AG04450 (cell line): ENCODE measurements at regions of chr3 and their contacts with region 1.

Region 1: GRCh38 chr3:61872077-61872706 is 310.8 kb downstream of the PTPRG start:
- DNase-seq: no peak
- H3K4me3 ChIP-seq: no peak overlapping the region
- H3K27ac ChIP-seq: no peak overlapping the region
- H3K27me3 ChIP-seq: no peaks in the 10 kb centered on the region
- CTCF ChIP-seq: no peak

Region 2: DNA sequence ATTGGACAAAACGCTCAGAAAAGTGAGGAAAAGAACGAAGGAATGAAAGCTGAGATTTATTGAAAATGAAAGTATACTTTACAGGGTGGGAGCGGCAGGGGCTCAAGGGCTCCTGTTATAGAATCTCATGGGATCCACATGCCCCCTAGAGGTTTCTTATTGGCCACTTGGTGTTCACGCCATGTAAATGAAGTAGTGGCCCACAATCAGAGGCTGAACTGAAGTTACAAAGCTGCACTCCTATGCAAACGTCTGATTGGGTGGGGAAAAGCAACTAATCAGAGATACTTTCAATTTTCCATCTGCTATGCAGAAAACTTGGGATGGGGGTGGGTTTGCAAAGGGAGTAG is 94.1 kb before region 1 on chr3:
- CTCF ChIA-PET with region 1: no interaction called
- POLR2A ChIA-PET with region 1: no interaction called
- DNase-seq: no peak
- H3K4me3 ChIP-seq: no peak overlapping the region
- H3K27ac ChIP-seq: no peak overlapping the region
- H3K27me3 ChIP-seq: no peaks in the 10 kb centered on the region
- CTCF ChIP-seq: no peak

Region 3: GRCh38 chr3:61807865-61808276 is 64.3 kb before region 1 on chr3:
- CTCF ChIA-PET with region 1: no interaction called
- POLR2A ChIA-PET with region 1: no interaction called
- DNase-seq: no peak
- H3K4me3 ChIP-seq: no peak overlapping the region
- H3K27ac ChIP-seq: no peak overlapping the region
- H3K27me3 ChIP-seq: no peaks in the 10 kb centered on the region
- CTCF ChIP-seq: no peak

Region 4: DNA sequence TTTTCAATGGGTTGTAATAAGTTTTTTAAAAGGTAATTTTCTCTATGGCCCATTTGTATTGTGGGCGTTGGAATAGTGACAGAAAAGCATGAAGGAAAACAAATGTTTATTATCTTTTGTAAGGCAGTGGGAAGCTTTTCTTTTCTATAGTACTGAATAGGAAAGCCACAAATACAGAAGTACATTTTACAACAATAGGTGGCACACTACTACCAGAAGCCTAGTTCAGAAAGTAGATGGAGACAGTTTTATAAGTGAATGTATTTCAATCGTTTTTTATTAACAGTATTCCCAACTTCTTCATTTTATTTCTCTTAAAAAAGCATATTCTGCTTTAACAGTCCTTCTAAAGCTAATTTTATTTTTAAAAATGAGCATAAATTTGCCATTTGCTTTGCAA is 14.1 kb before region 1 on chr3:
- CTCF ChIA-PET with region 1: interaction called, 17 read pairs
- POLR2A ChIA-PET with region 1: no interaction called
- DNase-seq: no peak
- H3K4me3 ChIP-seq: no peak overlapping the region
- H3K27ac ChIP-seq: no peak overlapping the region
- H3K27me3 ChIP-seq: no peaks in the 10 kb centered on the region
- CTCF ChIP-seq: peak; percentile 57

Region 5: DNA sequence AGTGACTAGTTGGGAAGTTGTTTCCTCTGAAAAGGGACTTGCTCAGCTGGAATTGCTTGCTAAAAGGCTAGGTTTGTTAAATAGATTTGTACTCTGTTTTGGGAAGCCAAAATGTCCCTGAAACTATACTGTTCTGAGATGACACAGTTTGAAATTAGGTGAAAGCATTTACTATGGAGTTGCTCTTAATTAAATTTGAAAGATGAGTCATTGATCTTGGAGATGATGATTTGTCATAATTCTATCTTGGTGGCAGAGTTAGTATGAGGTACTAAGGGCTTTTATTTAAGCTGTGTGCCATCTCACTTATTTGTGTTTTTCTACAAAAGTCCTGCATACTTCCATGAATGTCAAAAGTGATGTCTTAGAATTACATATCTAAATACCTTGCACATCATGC is 10.1 kb after region 1 on chr3:
- CTCF ChIA-PET with region 1: no interaction called
- POLR2A ChIA-PET with region 1: no interaction called
- DNase-seq: no peak
- H3K4me3 ChIP-seq: no peak overlapping the region
- H3K27ac ChIP-seq: no peak overlapping the region
- H3K27me3 ChIP-seq: no peaks in the 10 kb centered on the region
- CTCF ChIP-seq: no peak